Heart left ventricle (tissue), 16 donors: ENCODE measurements at regions of chr2 and their contacts with region 1.

Region 1: GRCh38 chr2:221573430-221574230 is 1.5 kb upstream of the EPHA4 start:
- DNase-seq: peak; percentile 81 to 92 (median 86)
- ATAC-seq: peak; percentile 69 to 85 (median 82)
- H3K4me3 ChIP-seq: peak overlapping the region; percentile 58 to 89 (median 76)
- H3K27ac ChIP-seq: peak overlapping the region; percentile 72 to 94 (median 86)
- H3K4me1 ChIP-seq: peaks cover 0 to 38% (median 16%) of the 10 kb centered on the region in 12 donors
- H3K27me3 ChIP-seq: peaks cover 0 to 53% (median 2%) of the 10 kb centered on the region in 9 donors
- CTCF ChIP-seq: peak; percentile 93 to 99 (median 98)
- POLR2A ChIP-seq: no peak

Region 2: DNA sequence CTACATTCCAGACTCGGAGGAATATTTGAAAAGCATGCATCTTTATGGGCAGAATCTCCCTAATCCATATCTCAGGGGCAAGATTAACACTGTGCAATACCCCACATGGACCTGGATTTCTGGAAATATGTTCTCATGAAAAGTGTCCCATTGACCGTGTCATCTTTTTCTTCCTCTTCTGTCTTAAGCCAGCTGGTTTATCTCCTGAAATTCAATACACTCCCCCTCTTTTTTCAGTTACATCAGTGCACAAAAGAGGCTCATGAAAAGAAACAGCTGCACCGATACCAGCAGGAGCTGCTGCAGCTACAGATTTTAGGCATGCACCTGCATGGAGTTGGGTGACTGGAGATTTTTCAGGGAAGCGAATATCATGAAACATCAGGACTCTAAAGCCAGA is 1829.0 kb before region 1 on chr2:
- intact Hi-C with region 1: loop called in 6 of 10 experiments (anchors 5 to 10 kb)
- DNase-seq: no peak
- ATAC-seq: no peak
- H3K4me3 ChIP-seq: no peak overlapping the region
- H3K27ac ChIP-seq: no peak overlapping the region
- H3K4me1 ChIP-seq: peaks cover 0 to 26% (median 9%) of the 10 kb centered on the region in 12 donors
- H3K27me3 ChIP-seq: no peaks in the 10 kb centered on the region
- CTCF ChIP-seq: peak in 2 of 12 donors; percentile 5 to 14
- POLR2A ChIP-seq: no peak

Region 3: GRCh38 chr2:220335591-220335915 is 1238.1 kb before region 1 on chr2:
- intact Hi-C with region 1: loop called in 1 of 10 experiments (anchors 5 kb)
- DNase-seq: no peak
- ATAC-seq: peak in 1 of 4 donors; percentile 52
- H3K4me3 ChIP-seq: no peak overlapping the region
- H3K27ac ChIP-seq: no peak overlapping the region
- H3K4me1 ChIP-seq: peaks cover 0 to 18% (median 0%) of the 10 kb centered on the region in 12 donors
- H3K27me3 ChIP-seq: no peaks in the 10 kb centered on the region
- CTCF ChIP-seq: no peak
- POLR2A ChIP-seq: no peak

Region 4: GRCh38 chr2:221104361-221104811 is 469.2 kb before region 1 on chr2:
- intact Hi-C with region 1: loop called in 8 of 10 experiments (anchors 1 to 10 kb)
- DNase-seq: peak; percentile 83 to 91 (median 86)
- ATAC-seq: peak; percentile 98 to 99 (median 98)
- H3K4me3 ChIP-seq: peak overlapping the region in 9 of 12 donors; percentile 4 to 25 (median 17)
- H3K27ac ChIP-seq: peak overlapping the region in 11 of 12 donors; percentile 9 to 72 (median 61)
- H3K4me1 ChIP-seq: peaks cover 0 to 28% (median 16%) of the 10 kb centered on the region in 12 donors
- H3K27me3 ChIP-seq: no peaks in the 10 kb centered on the region
- CTCF ChIP-seq: peak in 11 of 12 donors; percentile 8 to 44 (median 20)
- POLR2A ChIP-seq: no peak

Region 5: DNA sequence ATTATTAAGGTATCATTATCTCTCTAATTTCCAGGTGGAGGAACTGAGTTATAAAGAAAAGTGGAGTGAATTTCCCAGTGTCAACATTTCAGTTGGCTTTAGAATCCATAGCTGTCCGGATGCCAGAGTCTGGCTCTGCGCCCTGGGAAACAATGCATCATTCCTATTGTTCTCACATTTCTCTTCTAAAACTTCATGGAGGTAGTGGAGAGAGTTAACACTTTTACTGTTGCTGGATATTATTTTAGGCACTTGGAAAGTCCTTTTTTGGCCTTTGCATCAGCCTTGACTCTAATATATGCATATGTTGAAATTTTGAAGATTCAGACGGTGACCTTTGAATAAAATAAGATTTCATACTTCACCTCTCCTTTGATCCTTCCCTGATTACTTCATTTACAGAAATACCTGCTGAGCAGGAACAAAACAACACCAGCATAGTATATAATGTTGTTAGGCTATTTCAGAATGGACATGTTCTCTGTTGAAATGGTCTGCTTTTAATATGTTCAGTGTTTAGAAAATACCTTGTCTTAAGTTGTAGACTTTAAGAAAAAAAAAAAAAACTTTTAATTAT is 150.3 kb before region 1 on chr2:
- intact Hi-C with region 1: loop called in 2 of 10 experiments (anchors 5 kb)
- DNase-seq: peak in 3 of 5 donors; percentile 35 to 41 (median 35)
- ATAC-seq: peak in 3 of 4 donors; percentile 46 to 75 (median 49)
- H3K4me3 ChIP-seq: no peak overlapping the region
- H3K27ac ChIP-seq: peak overlapping the region in 5 of 12 donors; percentile 10 to 56 (median 17)
- H3K4me1 ChIP-seq: peaks cover 0 to 17% (median 4%) of the 10 kb centered on the region in 12 donors
- H3K27me3 ChIP-seq: no peaks in the 10 kb centered on the region
- CTCF ChIP-seq: no peak
- POLR2A ChIP-seq: no peak

Region 6: GRCh38 chr2:221465776-221466175 is 107.9 kb before region 1 on chr2:
- intact Hi-C with region 1: loop called in 1 of 10 experiments (anchors 10 kb)
- DNase-seq: peak in 1 of 5 donors; percentile 21
- ATAC-seq: no peak
- H3K4me3 ChIP-seq: no peak overlapping the region
- H3K27ac ChIP-seq: no peak overlapping the region
- H3K4me1 ChIP-seq: peaks cover 0 to 41% (median 19%) of the 10 kb centered on the region in 12 donors
- H3K27me3 ChIP-seq: no peaks in the 10 kb centered on the region
- CTCF ChIP-seq: no peak
- POLR2A ChIP-seq: no peak